ENCODE measurements at regions of chr12 and their contacts with region 1.

Region 1: DNA sequence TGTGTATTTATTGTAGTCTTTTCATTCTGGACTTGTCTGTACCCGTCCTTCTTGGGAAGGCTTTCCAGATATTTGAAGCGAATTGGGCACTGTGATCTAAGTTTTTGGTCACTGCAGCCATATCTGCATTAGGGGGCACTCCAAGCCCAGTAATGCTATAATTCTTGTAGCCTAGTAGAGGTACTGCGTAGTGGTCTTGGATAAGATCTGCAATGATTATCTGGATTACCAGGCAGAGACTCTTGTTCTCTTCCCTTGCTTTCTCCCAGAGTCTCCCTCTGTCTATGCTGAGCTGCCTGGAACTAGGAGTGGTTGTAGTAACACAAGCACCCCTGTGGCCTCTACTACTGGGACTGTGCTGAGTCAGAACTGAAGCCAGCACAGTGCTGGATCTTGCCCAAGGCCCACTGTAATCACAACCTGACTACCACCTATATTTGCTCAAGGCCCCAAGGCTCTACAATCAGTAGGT is 30.0 kb downstream of the SLC38A2 start:
- DNase-seq: no peak
- ATAC-seq: peak; percentile 85
- H3K4me3 ChIP-seq: no peak overlapping the region
- H3K27ac ChIP-seq: no peak overlapping the region
- H3K4me1 ChIP-seq: no peaks in the 10 kb centered on the region
- H3K27me3 ChIP-seq: no peaks in the 10 kb centered on the region

Region 2: GRCh38 chr12:46573347-46573658 is 230.7 kb after region 1 on chr12:
- intact Hi-C with region 1: no loop called
- DNase-seq: no peak
- ATAC-seq: peak; percentile 33
- H3K4me3 ChIP-seq: no peak overlapping the region
- H3K27ac ChIP-seq: no peak overlapping the region
- H3K4me1 ChIP-seq: peaks cover 0 to 11% of the 10 kb centered on the region in 2 donors
- H3K27me3 ChIP-seq: no peaks in the 10 kb centered on the region

Region 3: GRCh38 chr12:46933947-46934346 is 591.3 kb after region 1 on chr12:
- intact Hi-C with region 1: loop called in 1 of 2 experiments (anchors 10 kb)
- DNase-seq: no peak
- ATAC-seq: peak; percentile 62
- H3K4me3 ChIP-seq: no peak overlapping the region
- H3K27ac ChIP-seq: no peak overlapping the region
- H3K4me1 ChIP-seq: no peaks in the 10 kb centered on the region
- H3K27me3 ChIP-seq: no peaks in the 10 kb centered on the region

Measured in aorta (tissue), 5 donors.